Cardiac septum (tissue), 1 donor: ENCODE measurements at regions of chr21 and their contacts with region 1.

Region 1: GRCh38 chr21:33324291-33325221 is at the start of gene IFNAR1:
- DNase-seq: peak; percentile 98
- total RNA-seq, gene IFNAR1: 29.5 TPM

Region 2: GRCh38 chr21:33121715-33122475 is 202.7 kb before region 1 on chr21:
- intact Hi-C with region 1: no loop called
- DNase-seq: no peak

Region 3: DNA sequence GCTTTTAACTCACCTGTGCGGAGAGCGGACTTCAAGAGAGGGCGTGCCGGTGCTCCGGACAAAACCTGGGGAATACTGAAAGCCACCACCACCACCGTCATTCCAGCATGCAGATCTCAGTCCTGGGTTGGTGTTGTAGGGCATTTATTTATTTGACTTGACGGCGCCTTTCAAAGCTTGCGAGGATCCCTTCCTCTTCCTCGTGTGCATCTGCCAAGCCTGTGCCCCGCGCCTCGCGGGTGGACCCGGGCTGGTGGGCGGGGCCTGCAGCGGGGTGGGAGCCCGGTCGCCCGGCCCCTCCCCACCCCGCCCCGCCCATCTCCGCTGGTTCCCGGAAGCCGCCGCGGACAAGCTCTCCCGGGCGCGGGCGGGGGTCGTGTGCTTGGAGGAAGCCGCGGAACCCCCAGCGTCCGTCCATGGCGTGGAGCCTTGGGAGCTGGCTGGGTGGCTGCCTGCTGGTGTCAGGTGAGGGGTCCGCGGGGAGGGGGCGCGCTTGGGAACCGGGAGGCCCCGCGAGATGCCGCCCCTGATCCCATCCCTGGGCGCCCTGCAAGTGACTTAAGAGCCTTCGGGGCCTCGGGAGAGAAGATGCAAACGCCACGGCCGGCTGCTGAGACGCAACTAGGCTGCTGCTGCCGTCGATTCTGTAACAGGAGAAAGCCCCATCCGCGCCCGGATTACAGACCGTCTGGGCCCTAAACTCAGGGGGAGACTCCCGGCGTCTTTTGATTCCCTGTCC is 58.3 kb before region 1 on chr21 and contains the start of gene IL10RB:
- intact Hi-C with region 1: loop called (anchors 2 kb)
- DNase-seq: peak; percentile 94
- total RNA-seq, gene IL10RB: 7.2 TPM

Region 4: GRCh38 chr21:33286600-33287456 is 37.7 kb before region 1 on chr21:
- intact Hi-C with region 1: loop called (anchors 5 kb)
- DNase-seq: no peak

Region 5: DNA sequence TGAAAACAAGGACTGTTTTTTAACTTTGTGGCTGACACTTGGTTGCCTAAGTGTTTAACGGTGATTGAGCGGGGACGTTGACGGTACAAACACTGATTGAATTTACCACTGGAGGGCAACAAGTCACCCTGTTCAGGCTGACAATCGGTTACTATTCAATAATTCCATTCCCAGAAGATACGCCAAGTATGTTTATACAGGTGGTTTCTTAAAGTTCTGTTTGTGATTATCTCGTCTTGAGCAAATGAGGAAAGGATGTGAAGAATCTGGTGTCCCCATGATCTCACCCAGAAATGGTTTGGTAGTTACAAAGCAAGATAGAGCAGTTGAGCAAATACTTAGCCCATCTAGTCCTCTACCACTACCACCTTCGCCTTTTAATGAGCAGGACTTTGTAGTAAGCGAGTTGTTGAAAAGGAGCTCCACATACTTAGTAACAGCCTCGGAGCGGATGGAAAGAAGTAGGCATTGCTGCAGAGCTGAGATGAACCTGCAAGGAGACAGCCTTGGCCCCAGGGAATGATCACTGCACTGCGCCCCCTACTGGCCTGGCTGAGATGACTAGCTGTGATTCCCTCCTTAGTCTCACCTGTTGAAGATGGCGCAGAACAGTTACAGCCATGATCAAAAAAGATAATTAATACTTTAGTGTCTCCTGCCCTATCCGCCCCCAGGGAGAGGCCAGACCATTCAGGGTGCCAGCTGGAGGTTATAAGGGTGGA is 36.5 kb after region 1 on chr21:
- intact Hi-C with region 1: loop called (anchors 2 kb)
- DNase-seq: peak; percentile 90